Activated CD4-positive, alpha-beta memory T cell treated with anti-CD3 and anti-CD28 coated beads for 36 hours (primary cell): ENCODE measurements at regions of chr11 and their contacts with region 1.

Region 1: DNA sequence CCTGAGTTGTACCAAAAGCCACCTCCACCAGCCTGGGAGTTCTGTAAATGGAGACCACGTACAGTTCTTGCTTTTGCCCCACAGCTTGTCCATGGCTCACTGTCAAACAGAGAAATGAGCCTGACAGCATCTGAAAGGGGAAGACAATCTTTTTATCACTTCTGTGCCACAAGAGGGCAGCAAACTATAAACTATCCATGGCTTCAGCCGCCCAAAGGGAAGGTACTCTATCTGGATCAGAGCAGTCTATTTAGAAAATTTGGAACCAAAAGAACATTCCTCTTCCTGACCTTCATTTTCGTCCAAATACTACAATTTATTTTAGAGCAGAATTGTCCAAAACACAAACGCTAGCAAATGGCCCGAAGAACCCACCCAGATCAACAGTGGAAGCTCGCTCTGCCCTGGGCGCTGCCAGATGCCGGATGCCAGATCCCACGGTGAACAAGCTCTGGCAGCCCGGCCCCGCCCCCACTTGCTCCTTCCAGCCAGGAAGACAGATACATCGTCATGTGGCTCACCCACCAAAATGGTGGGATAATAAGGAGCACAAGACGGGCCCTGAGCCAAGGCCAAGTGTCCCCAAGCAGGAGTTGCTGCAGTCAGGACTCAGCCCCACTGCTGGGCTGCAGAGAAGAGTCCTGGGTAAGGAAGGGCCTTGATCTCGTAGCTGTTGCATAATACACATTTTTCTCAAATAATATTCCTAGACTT is 23.9 kb upstream of the SCGB1A1 start:
- DNase-seq: peak; percentile 54
- H3K4me3 Mint-ChIP-seq: no peak overlapping the region
- H3K27ac Mint-ChIP-seq: peak overlapping the region; percentile 9
- H3K4me1 Mint-ChIP-seq: peaks cover 13% of the 10 kb centered on the region
- H3K27me3 Mint-ChIP-seq: no peaks in the 10 kb centered on the region

Region 2: DNA sequence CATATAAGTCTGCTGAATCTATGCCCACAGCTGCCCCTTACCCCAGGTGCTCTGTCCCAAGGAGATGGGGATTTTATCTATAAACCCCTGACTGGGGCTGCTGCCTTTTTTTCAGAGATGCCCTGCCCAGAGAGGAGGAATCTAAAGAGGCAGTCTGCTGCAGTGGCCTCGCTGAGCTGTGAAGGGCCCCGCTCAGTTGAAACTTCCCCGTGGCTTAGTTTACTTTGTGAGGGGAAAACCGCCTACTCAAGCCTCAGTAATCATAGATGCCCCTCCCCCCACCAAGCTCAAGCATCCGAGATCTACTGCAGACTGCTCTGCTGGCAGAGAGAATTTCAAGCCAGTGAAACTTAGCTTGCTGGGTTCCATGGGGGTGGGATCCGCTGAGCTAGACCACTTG is 88.8 kb before region 1 on chr11:
- CTCF ChIA-PET with region 1: no interaction called
- POLR2A ChIA-PET with region 1: no interaction called
- intact Hi-C with region 1: no loop called
- DNase-seq: no peak
- H3K4me3 Mint-ChIP-seq: no peak overlapping the region
- H3K27ac Mint-ChIP-seq: no peak overlapping the region
- H3K4me1 Mint-ChIP-seq: peaks cover 2% of the 10 kb centered on the region
- H3K27me3 Mint-ChIP-seq: peaks cover 22% of the 10 kb centered on the region

Region 3: DNA sequence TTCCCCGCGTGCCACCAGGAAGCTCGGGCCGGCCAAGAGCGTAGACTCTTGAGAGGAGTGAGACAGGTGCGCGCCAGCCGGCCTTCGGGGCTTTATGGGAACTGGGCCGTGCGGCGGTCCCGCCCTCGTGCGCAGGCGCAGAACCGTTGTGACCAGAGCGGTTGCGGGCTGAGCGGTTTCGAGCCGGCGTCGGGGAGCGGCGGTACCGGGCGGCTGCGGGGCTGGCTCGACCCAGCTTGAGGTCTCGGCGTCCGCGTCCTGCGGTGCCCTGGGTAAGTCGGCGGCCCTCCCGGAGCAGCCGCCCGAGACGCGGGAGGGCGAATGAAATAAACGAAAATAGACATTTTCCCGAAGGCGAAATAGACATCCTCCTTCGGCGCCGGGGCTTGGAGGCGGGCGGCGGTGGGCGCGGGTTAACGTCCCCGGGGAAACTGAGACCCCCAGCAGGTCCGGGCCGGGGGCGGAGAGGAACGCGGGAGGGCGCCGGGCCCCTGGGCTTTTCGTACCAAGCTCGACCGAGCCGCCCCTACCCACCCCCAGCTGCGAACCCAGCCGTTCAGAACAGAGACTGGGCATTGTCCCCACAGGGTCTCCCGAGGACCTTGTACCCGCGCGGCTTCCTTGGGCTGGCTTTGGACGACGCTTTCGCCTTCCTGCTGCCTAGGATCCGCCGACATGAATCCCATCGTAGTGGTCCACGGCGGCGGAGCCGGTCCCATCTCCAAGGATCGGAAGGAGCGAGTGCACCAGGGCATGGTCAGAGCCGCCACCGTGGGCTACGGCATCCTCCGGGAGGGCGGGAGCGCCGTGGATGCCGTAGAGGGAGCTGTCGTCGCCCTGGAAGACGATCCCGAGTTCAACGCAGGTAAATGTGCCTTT is 57.4 kb before region 1 on chr11 and contains the start of gene ASRGL1:
- CTCF ChIA-PET with region 1: interaction called, 13 read pairs
- POLR2A ChIA-PET with region 1: no interaction called
- intact Hi-C with region 1: no loop called
- DNase-seq: peak; percentile 81
- H3K4me3 Mint-ChIP-seq: peak within 1 kb of the TSS; percentile 82
- H3K27ac Mint-ChIP-seq: no peak within 1 kb of the TSS
- H3K4me1 Mint-ChIP-seq: peaks cover 8% of the 10 kb centered on the region
- H3K27me3 Mint-ChIP-seq: peaks cover 8% of the 10 kb centered on the region
- total RNA-seq, gene ASRGL1: 7.7 to 8.2 TPM

Region 4: DNA sequence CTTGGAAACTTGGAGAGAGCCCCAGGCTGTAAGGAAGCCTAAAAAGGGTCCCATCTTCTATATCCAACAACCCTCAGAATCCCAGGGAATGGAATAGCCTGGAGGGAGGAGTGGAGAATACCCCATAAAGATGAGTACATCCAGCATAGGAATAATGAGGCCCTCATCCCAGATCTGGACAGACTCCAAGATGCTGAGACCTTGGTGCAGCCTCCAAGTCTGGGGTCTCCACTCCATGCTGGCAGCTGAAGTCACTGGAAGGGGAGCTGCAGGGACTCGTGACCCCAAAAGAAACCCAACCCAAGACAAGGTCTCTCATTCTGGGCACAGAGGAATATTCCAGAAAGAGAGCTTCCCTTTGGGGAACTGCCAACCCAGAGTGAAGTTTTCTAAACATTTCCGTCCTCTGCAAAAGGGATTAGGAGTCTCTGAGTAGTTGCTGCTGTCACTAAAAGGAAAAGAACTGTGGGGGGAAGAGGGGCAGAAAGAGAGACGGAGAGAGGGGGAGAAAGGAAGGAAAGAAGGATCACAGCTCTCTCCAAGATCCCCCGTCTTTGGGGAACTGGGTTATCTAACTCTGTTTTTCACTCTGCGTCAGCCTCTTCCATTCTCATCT is 24.4 kb after region 1 on chr11:
- CTCF ChIA-PET with region 1: interaction called, 49 read pairs
- POLR2A ChIA-PET with region 1: no interaction called
- intact Hi-C with region 1: loop called (anchors 2 kb)
- DNase-seq: no peak
- H3K4me3 Mint-ChIP-seq: no peak overlapping the region
- H3K27ac Mint-ChIP-seq: no peak overlapping the region
- H3K4me1 Mint-ChIP-seq: peaks cover under 1% of the 10 kb centered on the region
- H3K27me3 Mint-ChIP-seq: no peaks in the 10 kb centered on the region

Region 5: DNA sequence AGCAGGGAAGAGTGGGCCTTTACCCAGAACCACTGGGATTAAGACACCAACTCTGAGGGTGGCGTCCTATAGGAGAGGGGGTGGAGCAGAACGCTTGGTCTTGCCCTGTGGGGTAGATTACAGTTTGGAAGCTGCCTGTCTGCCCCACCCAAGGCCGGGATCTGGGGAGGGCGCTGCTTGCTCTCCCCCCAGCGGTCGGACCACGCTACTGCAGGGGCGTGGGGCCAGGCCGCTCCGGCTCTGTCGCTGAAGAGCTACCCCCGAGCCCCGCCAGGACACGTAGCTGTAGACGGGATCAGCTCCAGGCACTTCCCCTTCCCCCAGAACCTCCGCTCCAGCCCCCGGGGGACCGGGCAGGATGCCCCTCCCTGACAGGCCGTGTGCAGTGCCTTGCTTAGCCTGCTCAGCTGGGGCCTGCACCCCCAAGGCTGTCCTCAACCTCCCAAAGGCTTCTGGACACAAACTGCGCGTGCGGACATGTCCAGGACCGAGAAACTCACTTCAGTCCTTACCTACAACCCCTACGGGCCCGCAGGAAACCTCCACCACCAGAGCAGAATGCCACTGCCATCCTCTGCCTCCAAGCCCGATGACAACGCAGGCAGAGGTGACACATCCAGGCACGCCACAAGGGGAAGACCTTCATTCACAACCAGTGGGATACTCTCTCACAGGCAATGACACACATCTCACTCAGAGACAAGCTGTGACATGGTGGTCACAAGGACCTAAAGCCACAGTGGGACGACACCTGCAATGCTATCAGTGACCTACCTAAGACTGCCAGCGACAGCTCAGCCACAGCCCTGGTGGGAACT is 148.0 kb after region 1 on chr11:
- CTCF ChIA-PET with region 1: interaction called, 48 read pairs
- POLR2A ChIA-PET with region 1: no interaction called
- intact Hi-C with region 1: no loop called
- DNase-seq: peak; percentile 88
- H3K4me3 Mint-ChIP-seq: peak overlapping the region; percentile 93
- H3K27ac Mint-ChIP-seq: peak overlapping the region; percentile 83
- H3K4me1 Mint-ChIP-seq: peaks cover 75% of the 10 kb centered on the region
- H3K27me3 Mint-ChIP-seq: no peaks in the 10 kb centered on the region

Region 6: GRCh38 chr11:62556108-62556871 is 161.3 kb after region 1 on chr11:
- CTCF ChIA-PET with region 1: interaction called, 27 read pairs
- POLR2A ChIA-PET with region 1: no interaction called
- intact Hi-C with region 1: no loop called
- DNase-seq: peak; percentile 94
- H3K4me3 Mint-ChIP-seq: peak overlapping the region; percentile 59
- H3K27ac Mint-ChIP-seq: peak overlapping the region; percentile 96
- H3K4me1 Mint-ChIP-seq: peaks cover 96% of the 10 kb centered on the region
- H3K27me3 Mint-ChIP-seq: peaks cover 2% of the 10 kb centered on the region

Region 7: DNA sequence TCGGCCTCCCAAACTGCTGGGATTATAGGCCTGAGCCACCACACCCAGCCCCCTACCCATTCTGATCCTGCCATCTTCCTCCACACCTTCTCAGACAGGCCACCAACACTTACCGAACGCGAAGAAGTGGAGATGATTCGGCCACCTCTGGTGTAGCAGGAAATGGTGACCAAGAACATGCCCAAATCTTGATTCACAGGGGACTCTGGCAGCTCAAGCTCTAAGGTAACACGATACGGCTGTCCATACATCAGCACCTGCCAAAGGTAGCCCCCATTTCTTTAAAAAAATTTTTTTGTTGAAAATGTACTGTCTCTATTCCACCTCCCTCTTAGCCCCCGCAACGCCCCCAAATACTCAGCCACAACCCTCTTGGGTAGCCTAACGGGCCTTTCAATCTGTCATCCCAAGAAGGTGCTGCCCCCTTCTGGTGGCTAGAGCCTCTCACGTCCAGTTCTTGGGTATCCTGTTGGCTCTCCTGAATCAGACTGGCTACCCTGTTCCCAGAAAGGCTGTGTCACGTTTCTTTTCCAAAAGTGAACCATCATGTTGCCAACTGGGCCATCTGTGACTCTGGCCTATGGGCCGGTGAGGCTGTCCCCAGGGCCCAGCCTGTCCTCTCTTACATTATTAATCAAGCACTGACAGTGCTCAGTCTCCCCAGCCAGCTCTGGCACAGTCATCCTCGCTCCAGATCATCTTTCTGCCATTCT is 299.6 kb after region 1 on chr11:
- CTCF ChIA-PET with region 1: interaction called, 15 read pairs
- POLR2A ChIA-PET with region 1: no interaction called
- intact Hi-C with region 1: no loop called
- DNase-seq: peak; percentile 81
- H3K4me3 Mint-ChIP-seq: no peak overlapping the region
- H3K27ac Mint-ChIP-seq: no peak overlapping the region
- H3K4me1 Mint-ChIP-seq: peaks cover 5% of the 10 kb centered on the region
- H3K27me3 Mint-ChIP-seq: no peaks in the 10 kb centered on the region

Region 8: DNA sequence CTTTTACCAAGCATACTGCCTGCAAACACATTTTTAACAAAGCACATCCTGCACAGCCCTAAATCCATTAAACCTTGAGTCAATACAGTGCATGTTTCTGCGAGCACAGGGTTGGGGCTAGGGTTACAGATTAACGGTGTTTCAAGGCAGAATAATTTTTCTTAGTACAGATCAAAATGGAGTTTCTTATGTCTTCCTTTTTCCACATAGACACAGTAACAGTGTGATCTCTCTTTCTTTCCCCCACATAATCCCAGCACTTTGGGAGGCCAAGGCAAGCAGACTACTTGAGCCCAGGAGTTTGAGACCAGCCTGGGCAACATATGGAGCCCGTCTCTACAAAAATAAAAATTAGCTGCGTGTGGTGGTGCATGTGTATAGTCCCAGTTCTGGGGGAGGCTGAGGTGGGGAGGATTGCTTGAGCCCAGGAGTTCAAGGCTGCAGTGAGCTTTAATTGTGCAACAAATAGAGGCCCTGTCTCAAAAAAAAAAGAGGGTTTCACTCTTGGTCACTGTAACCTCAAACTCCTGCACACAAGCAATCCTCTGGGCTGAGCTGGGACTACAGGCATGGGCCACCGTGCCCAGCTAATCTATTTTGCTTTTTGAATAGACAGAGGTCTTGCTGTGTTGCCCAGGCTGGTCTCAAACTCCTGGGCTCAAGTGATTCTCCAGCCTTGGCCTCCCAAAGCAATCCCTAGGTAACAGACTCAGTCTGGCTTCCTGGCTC is 466.0 kb after region 1 on chr11:
- CTCF ChIA-PET with region 1: no interaction called
- POLR2A ChIA-PET with region 1: no interaction called
- intact Hi-C with region 1: loop called (anchors 10 kb)
- DNase-seq: peak; percentile 14
- H3K4me3 Mint-ChIP-seq: no peak overlapping the region
- H3K27ac Mint-ChIP-seq: no peak overlapping the region
- H3K4me1 Mint-ChIP-seq: peaks cover 43% of the 10 kb centered on the region
- H3K27me3 Mint-ChIP-seq: no peaks in the 10 kb centered on the region